ENCODE measurements at regions of chr19 and their contacts with region 1.

Region 1: DNA sequence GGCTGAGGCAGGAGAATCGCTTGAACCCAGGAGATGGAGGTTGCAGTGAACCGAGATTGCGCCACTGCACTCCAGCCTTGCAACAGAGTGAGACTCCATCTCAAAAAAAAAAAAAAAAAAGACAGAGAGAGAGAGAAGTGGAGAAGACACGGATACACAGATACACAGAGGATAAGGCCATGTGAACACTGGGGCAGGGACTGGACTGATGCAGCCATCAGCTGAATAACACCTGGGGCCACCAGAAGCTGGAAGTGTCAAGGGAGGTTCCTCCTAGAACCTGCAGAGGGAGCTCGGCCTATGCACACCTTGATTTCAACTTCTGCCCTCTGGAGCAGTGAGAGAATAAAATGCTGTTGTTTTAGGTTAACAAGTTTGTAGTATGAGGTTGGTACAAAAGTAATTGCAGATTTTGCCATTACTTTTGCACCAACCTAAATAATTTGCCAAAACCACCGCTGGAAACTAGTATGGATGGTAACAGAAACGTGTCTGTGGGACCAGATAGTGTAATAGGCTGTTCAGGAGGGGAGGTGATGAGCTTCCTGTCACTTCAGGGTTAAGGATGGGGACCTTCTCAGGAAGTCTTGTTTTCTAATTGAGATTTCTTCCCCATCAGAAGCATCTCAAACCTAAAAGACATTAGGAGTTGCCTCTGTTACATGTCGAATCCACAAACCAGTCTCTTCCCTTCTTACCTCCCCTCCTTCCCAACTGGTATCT is 36.4 kb upstream of the IGSF23 start:
- DNase-seq: peak; percentile 56
- H3K4me3 ChIP-seq: no peak overlapping the region
- H3K27ac ChIP-seq: no peak overlapping the region
- H3K4me1 ChIP-seq: no peaks in the 10 kb centered on the region
- H3K27me3 ChIP-seq: no peaks in the 10 kb centered on the region
- CTCF ChIP-seq: peak; percentile 79 to 84

Region 2: GRCh38 chr19:44657211-44657921 is 80.4 kb after region 1 on chr19:
- CTCF ChIA-PET with region 1: no interaction called
- dilution Hi-C with region 1: loop called (anchors 5 kb)
- in situ Hi-C with region 1: no loop called
- intact Hi-C with region 1: loop called (anchors 2 kb)
- DNase-seq: no peak
- H3K4me3 ChIP-seq: no peak overlapping the region
- H3K27ac ChIP-seq: no peak overlapping the region
- H3K4me1 ChIP-seq: no peaks in the 10 kb centered on the region
- H3K27me3 ChIP-seq: no peaks in the 10 kb centered on the region
- CTCF ChIP-seq: peak; percentile 88

Region 3: DNA sequence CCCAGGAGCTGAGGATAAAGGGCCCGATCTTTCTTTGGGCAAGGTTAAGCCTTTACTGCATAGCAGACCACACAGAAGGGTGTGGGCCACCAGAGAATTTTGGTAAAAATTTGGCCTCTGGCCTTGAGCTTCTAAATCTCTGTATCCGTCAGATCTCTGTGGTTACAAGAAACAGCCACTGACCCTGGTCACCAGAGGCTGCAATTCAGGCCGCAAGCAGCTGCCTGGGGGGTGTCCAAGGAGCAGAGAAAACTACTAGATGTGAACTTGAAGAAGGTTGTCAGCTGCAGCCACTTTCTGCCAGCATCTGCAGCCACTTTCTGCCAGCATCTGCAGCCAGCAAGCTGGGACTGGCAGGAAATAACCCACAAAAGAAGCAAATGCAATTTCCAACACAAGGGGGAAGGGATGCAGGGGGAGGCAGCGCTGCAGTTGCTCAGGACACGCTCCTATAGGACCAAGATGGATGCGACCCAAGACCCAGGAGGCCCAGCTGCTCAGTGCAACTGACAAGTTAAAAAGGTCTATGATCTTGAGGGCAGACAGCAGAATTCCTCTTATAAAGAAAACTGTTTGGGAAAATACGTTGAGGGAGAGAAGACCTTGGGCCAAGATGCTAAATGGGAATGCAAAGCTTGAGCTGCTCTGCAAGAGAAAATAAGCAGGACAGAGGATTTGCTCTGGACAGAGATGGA is 85.8 kb after region 1 on chr19:
- CTCF ChIA-PET with region 1: no interaction called
- dilution Hi-C with region 1: loop called (anchors 5 kb)
- in situ Hi-C with region 1: no loop called
- intact Hi-C with region 1: no loop called
- DNase-seq: no peak
- H3K4me3 ChIP-seq: no peak overlapping the region
- H3K27ac ChIP-seq: no peak overlapping the region
- H3K4me1 ChIP-seq: no peaks in the 10 kb centered on the region
- H3K27me3 ChIP-seq: no peaks in the 10 kb centered on the region
- CTCF ChIP-seq: no peak

Region 4: DNA sequence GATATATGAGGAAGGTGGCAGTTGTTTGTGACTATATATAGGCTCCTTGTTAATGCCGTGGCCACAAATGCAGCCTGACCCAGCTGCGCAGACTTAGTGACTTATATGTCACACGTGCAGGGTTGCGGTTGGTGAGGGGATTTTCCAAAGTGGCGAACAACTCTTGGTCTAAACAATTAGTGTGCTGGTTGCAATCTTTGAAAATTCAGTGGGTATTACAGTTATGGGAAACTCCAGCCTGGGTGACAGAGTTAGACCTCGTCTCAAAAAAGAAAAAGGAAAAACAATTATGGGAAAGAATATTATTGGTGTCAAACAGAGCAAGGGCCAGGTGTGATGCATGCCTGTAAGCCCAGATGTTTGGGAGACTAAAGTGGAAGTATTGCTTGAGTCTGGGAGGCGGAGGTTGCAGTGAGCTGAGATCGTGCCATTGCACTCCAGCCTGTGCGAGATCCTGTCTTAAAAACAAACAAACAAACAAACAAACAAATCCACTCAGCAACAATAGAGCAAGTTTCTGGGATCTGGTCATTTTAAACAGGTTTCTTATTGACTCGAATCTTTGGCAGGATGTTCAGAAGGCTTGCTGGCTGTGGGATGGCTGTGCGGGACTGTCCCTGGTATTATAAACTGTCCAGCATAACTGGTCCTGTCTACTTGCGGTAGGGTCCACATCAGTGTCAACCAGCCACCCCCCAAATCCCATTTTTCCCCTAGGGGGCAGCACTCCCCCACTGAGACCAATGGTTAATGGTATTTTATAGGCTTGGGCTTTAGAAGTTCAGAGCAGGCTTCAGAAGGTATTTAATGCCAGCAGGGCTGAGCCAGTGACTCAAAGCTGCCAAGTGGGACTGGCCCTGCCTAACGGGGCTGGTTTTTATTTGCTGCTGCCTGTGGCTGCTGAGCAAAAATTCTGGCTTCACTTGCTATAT is 439.6 kb after region 1 on chr19:
- CTCF ChIA-PET with region 1: no interaction called
- dilution Hi-C with region 1: no loop called
- in situ Hi-C with region 1: no loop called
- intact Hi-C with region 1: no loop called
- DNase-seq: peak; percentile 67
- H3K4me3 ChIP-seq: no peak overlapping the region
- H3K27ac ChIP-seq: no peak overlapping the region
- H3K4me1 ChIP-seq: no peaks in the 10 kb centered on the region
- H3K27me3 ChIP-seq: no peaks in the 10 kb centered on the region
- CTCF ChIP-seq: peak; percentile 63

Region 5: DNA sequence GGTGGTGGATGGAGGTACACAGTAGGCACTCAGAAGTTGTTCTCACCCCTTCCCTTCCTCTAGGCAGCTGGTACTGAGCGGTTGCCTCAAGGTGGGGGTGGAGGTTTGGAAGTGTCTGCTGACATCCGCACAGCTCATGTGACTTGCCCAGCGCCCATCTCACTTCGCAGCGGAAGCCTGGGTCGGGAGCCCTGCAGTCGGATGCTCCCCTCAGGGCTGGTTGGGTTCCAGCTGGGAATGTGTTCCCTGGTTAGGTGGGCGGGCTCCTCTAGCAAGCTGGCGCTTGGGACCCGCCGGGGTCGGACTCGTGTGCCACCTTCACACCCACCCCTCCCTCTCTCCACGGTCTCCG is 526.1 kb after region 1 on chr19:
- CTCF ChIA-PET with region 1: no interaction called
- dilution Hi-C with region 1: no loop called
- in situ Hi-C with region 1: no loop called
- intact Hi-C with region 1: no loop called
- DNase-seq: no peak
- H3K4me3 ChIP-seq: peak overlapping the region in 1 of 3 experiments; percentile 6
- H3K27ac ChIP-seq: no peak overlapping the region
- H3K4me1 ChIP-seq: peaks cover 45% of the 10 kb centered on the region
- H3K27me3 ChIP-seq: no peaks in the 10 kb centered on the region
- CTCF ChIP-seq: no peak